T-cell (primary cell): ENCODE measurements at regions of chr13 and their contacts with region 1.

Region 1: DNA sequence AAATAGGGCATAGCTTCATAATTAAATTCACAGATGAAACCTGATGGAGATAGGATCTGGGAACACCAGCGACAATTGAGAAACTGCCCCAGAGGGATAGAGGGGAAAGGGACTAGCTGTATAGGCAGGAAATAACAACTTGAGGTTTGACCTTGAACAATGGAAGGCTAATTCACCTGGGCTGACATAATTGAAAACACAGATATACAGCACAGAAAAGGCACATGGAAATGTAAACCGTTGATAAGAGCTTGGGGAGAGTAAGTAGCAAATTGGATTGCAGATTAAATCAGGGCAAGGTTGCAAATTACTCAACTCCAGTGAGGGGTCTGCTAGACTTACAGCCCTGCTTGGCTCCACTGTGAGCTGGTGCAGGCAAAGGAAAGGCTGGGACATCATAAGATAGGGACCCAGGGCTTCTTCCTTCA is 246.7 kb downstream of the DLEU7 start:
- DNase-seq: no peak
- ATAC-seq: no peak
- H3K4me3 ChIP-seq: no peak overlapping the region
- H3K4me3 Mint-ChIP-seq: no peak overlapping the region
- H3K27ac ChIP-seq: no peak overlapping the region
- H3K27ac Mint-ChIP-seq: no peak overlapping the region
- H3K4me1 ChIP-seq: peaks cover 22 to 33% of the 10 kb centered on the region in 2 experiments
- H3K4me1 Mint-ChIP-seq: peaks cover 37 to 44% (median 44%) of the 10 kb centered on the region in 3 donors
- H3K27me3 ChIP-seq: no peaks in the 10 kb centered on the region
- H3K27me3 Mint-ChIP-seq: no peaks in the 10 kb centered on the region

Region 2: GRCh38 chr13:49936085-49936940 is 660.5 kb before region 1 on chr13 and contains the start of gene SPRYD7:
- CTCF ChIA-PET with region 1: no interaction called
- POLR2A ChIA-PET with region 1: interaction called in 1 of 2 experiments, 10 read pairs
- DNase-seq: peak; percentile 75 to 96 (median 87)
- ATAC-seq: peak; percentile 84 to 89 (median 88)
- H3K4me3 ChIP-seq: peak within 1 kb of the TSS; percentile 91 to 97
- H3K4me3 Mint-ChIP-seq: peak within 1 kb of the TSS; percentile 85 to 95 (median 90)
- H3K27ac ChIP-seq: peak within 1 kb of the TSS; percentile 39
- H3K27ac Mint-ChIP-seq: peak within 1 kb of the TSS; percentile 72 to 88
- H3K4me1 ChIP-seq: peaks cover 5 to 14% of the 10 kb centered on the region in 2 experiments
- H3K4me1 Mint-ChIP-seq: peaks cover 13 to 25% (median 22%) of the 10 kb centered on the region in 3 donors
- H3K27me3 ChIP-seq: peaks cover 0 to 11% of the 10 kb centered on the region in 2 experiments
- H3K27me3 Mint-ChIP-seq: no peaks in the 10 kb centered on the region
- total RNA-seq, gene SPRYD7: 1.6 to 4.7 (median 3.2) TPM

Region 3: DNA sequence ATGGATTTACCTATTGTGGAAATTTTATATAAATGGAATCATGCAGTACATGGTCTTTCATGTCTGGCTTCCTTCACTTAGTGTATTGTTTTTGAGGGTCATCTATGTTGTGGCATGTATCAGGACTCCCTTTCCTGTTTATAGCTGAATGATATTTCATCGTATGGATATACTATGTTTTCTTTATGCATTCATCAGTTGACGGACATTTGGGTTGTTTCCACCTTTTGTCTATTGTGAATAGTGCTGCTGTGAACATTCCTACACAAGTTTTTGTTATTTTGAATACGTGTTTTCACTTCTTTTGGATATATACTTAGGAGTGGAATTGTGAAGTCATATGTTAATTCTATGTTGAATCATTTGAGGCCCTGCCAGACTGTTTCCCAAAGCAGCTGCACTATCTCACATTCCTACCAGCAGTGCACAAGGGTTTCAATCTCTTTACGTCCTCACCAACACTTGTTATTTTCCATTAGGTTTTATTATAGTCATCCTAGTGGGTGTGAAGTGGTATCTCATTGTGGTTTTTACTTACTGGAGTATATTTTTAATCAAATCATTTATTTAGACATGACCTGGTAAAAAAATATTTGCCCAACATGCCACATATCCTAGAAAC is 16.0 kb before region 1 on chr13:
- CTCF ChIA-PET with region 1: no interaction called
- POLR2A ChIA-PET with region 1: no interaction called
- DNase-seq: no peak
- ATAC-seq: no peak
- H3K4me3 ChIP-seq: no peak overlapping the region
- H3K4me3 Mint-ChIP-seq: no peak overlapping the region
- H3K27ac ChIP-seq: no peak overlapping the region
- H3K27ac Mint-ChIP-seq: no peak overlapping the region
- H3K4me1 ChIP-seq: no peaks in the 10 kb centered on the region
- H3K4me1 Mint-ChIP-seq: peaks cover 0 to 7% (median 2%) of the 10 kb centered on the region in 3 donors
- H3K27me3 ChIP-seq: no peaks in the 10 kb centered on the region
- H3K27me3 Mint-ChIP-seq: no peaks in the 10 kb centered on the region

Region 4: DNA sequence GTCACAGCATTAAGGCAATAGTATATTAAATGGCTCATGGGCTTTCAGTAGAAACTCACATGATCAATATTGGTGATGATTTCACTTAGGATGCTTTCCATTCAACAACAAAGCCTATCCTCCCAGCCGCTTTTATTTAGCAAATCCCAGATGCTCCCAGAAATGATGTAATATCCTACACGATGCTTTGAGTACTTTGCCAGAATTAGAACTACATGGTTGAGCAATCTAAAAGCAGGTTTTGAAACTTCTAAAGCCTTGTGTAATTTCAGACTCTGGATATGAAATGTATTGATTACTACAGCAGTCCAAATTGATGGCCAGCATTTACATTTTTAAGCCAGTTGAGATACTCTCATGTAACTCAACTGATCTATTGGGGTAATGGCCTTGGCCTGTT is 233.1 kb after region 1 on chr13:
- CTCF ChIA-PET with region 1: interaction called in 1 of 2 experiments, 12 read pairs
- POLR2A ChIA-PET with region 1: no interaction called
- DNase-seq: no peak
- ATAC-seq: no peak
- H3K4me3 ChIP-seq: no peak overlapping the region
- H3K4me3 Mint-ChIP-seq: no peak overlapping the region
- H3K27ac ChIP-seq: no peak overlapping the region
- H3K27ac Mint-ChIP-seq: no peak overlapping the region
- H3K4me1 ChIP-seq: no peaks in the 10 kb centered on the region
- H3K4me1 Mint-ChIP-seq: no peaks in the 10 kb centered on the region
- H3K27me3 ChIP-seq: no peaks in the 10 kb centered on the region
- H3K27me3 Mint-ChIP-seq: peaks cover 0 to 2% of the 10 kb centered on the region in 2 donors